PC-9 (cell line): ENCODE measurements at regions of chr5 and their contacts with region 1.

Region 1: GRCh38 chr5:35651002-35651756 is 33.5 kb downstream of the SPEF2 start:
- DNase-seq: peak; percentile 29 to 43
- H3K4me3 ChIP-seq: no peak overlapping the region
- H3K27ac ChIP-seq: no peak overlapping the region
- H3K4me1 ChIP-seq: no peaks in the 10 kb centered on the region
- H3K27me3 ChIP-seq: no peaks in the 10 kb centered on the region
- CTCF ChIP-seq: peak; percentile 70

Region 2: GRCh38 chr5:35777358-35778087 is 126.3 kb after region 1 on chr5:
- CTCF ChIA-PET with region 1: no interaction called
- POLR2A ChIA-PET with region 1: no interaction called
- intact Hi-C with region 1: no loop called
- DNase-seq: peak; percentile 44 to 47
- H3K4me3 ChIP-seq: no peak overlapping the region
- H3K27ac ChIP-seq: no peak overlapping the region
- H3K4me1 ChIP-seq: no peaks in the 10 kb centered on the region
- H3K27me3 ChIP-seq: no peaks in the 10 kb centered on the region
- CTCF ChIP-seq: peak; percentile 87

Region 3: DNA sequence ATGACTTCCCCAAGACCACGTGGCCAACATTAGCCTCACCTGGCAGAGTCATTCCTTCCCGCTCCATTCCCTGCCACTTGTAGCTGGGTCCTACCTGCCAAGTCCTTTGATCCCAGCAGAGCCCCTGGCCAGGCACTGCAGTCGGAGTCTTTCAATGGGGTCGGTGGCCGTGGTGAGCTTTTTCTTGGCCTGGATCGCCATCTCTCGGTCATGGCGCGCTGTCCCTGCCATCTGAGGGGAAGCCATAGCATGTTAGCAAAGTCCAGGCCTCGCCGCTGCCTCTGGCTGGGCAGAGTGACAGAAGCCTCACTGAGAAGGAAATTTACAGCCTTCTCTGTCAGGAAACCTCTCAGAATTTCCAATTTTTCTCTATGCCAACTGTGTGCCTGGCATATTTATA is 269.7 kb after region 1 on chr5:
- CTCF ChIA-PET with region 1: interaction called, 6 read pairs
- POLR2A ChIA-PET with region 1: no interaction called
- intact Hi-C with region 1: loop called (anchors 1 kb)
- DNase-seq: no peak
- H3K4me3 ChIP-seq: no peak overlapping the region
- H3K27ac ChIP-seq: no peak overlapping the region
- H3K4me1 ChIP-seq: no peaks in the 10 kb centered on the region
- H3K27me3 ChIP-seq: peaks cover 12% of the 10 kb centered on the region; the same call in 1 of the 2 replicates
- CTCF ChIP-seq: no peak